ENCODE measurements at regions of chr1 and their contacts with region 1.

Region 1: GRCh38 chr1:154616659-154617345 is 8.8 kb upstream of the ADAR start:
- DNase-seq: no peak
- H3K4me3 Mint-ChIP-seq: no peak overlapping the region
- H3K27ac Mint-ChIP-seq: no peak overlapping the region
- H3K4me1 Mint-ChIP-seq: peaks cover 6% of the 10 kb centered on the region
- H3K27me3 Mint-ChIP-seq: no peaks in the 10 kb centered on the region
- CTCF ChIP-seq: no peak

Region 2: DNA sequence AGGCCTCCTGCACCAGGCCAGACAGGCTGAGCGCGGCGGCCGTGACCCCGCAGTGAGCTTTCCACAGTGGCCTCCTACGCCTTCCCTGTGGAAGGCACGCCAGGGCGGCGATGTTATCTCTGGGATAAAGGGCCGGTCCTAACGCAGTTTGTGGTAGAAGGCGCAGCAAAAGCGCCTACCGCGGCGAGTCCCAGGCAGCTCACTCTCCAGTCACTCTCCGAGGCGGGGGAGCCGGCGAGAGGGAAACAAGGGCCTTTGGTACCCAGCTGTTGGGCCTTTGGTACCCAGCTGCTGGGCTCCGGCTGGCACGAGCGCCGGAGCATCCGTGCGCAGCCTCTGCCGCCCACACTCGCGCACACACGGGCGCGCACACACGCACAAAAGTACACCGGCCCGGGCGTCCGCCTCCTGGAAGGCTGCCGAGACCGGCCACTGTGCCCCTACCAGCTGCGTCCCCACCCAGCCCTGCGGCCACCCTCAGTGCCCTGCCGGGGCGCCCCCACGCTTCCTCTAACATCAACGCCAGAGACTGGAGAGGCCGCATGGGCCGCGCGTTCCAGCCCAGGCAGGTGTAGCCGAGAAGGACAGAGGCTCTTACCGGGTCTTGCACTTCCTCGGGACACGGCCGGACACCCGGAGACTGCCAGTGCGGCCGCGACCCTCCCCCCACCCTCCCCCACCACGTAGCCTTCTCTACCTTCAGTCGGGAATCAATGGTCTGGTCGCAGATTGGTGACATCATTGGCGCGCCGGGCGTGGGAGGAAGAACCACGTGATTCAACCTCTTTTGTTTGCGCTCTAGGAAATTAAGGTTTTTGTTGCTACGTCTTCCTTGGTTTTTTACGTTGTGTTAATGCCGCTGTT is 10.7 kb after region 1 on chr1:
- CTCF ChIA-PET with region 1: interaction called, 4 read pairs
- POLR2A ChIA-PET with region 1: interaction called, 161 read pairs
- intact Hi-C with region 1: no loop called
- DNase-seq: peak; percentile 93
- H3K4me3 Mint-ChIP-seq: peak overlapping the region; percentile 84
- H3K27ac Mint-ChIP-seq: peak overlapping the region; percentile 99
- H3K4me1 Mint-ChIP-seq: peaks cover 29% of the 10 kb centered on the region
- H3K27me3 Mint-ChIP-seq: peaks cover 26% of the 10 kb centered on the region
- CTCF ChIP-seq: no peak

Measured in MCF 10A (cell line).